ENCODE measurements at regions of chr4 and their contacts with region 1.

Region 1: DNA sequence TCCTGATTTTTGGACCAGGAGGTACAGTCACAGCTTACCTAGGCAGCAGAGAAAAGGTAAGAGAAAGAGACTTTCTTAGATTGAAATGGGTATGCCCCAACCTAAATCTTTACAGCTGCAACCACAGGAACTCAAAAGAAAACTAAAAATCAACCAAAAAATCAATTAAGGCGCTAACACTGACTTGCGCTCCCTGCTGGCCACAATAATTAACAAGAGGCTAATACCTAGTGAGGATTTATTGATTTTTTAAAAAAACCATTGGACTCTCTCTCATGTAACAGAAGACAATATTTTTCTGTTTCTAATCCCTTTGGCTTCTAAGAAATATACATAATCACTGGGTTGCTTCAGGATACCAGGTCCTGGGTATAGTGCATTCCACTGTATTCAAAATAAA is 153.9 kb upstream of the TENM3 start:
- DNase-seq: peak in 1 of 2 experiments; percentile 50
- H3K4me3 ChIP-seq: no peak overlapping the region
- H3K27ac ChIP-seq: no peak overlapping the region
- H3K4me1 ChIP-seq: peaks cover 0 to 14% (median 3%) of the 10 kb centered on the region in 4 experiments; a peak in 3 of 7 replicates
- H3K27me3 ChIP-seq: no peaks in the 10 kb centered on the region
- CTCF ChIP-seq: peak in 2 of 3 experiments; percentile 42 to 55; a peak in 2 of 4 replicates
- EP300 ChIP-seq: no peak
- POLR2A ChIP-seq: no peak
- RAD21 ChIP-seq: peak; percentile 55 to 66

Region 2: DNA sequence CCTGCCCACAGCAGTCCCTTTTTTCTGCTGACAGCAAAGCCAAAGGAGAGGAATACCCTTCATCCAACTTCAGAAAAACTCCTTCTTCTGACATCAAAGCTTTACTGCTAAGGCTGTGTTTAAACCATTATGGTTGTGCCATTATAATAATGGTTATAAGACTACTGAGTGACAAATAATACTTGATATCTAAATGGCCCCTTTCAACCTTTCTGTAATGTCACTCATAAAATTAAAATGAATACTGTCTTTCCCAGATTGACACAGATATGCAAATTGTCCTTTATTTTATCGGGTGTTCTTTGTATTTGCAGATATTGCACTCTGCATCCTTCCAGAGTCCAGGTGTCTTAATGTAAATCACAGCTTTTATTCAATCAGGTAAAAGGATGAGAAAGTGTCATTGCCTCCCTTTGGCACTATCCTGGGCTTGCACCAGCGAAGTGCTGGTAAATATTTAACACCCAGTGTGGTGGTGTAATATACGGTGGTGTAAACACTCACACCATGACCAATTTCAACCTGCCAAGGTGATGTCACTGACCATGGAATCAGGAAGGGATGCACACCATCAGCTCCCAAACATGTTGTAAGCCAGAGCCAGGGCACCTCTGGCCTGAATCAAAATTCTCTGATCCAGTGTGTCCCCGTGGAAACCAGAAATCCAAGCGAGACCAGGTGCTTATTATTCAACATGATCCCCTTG is 14.4 kb after region 1 on chr4:
- CTCF ChIA-PET with region 1: interaction called, 14 read pairs
- POLR2A ChIA-PET with region 1: no interaction called
- DNase-seq: no peak
- H3K4me3 ChIP-seq: no peak overlapping the region
- H3K27ac ChIP-seq: no peak overlapping the region
- H3K4me1 ChIP-seq: peaks cover 0 to 2% (median 0%) of the 10 kb centered on the region in 4 experiments; a peak in 2 of 7 replicates
- H3K27me3 ChIP-seq: no peaks in the 10 kb centered on the region
- CTCF ChIP-seq: no peak
- EP300 ChIP-seq: no peak
- POLR2A ChIP-seq: no peak
- RAD21 ChIP-seq: no peak

Region 3: GRCh38 chr4:182478475-182478874 is 389.1 kb after region 1 on chr4:
- CTCF ChIA-PET with region 1: no interaction called
- POLR2A ChIA-PET with region 1: no interaction called
- DNase-seq: no peak
- H3K4me3 ChIP-seq: no peak overlapping the region
- H3K27ac ChIP-seq: no peak overlapping the region
- H3K4me1 ChIP-seq: no peaks in the 10 kb centered on the region
- H3K27me3 ChIP-seq: no peaks in the 10 kb centered on the region
- CTCF ChIP-seq: peak in 2 of 3 experiments; percentile 24 to 31; a peak in 2 of 4 replicates
- EP300 ChIP-seq: no peak
- POLR2A ChIP-seq: no peak
- RAD21 ChIP-seq: peak; percentile 23 to 41; a peak in 3 of 4 replicates

Measured in H1 (cell line).